CD8-positive, alpha-beta T cell (primary cell): ENCODE measurements at regions of chr2 and their contacts with region 1.

Region 1: GRCh38 chr2:46351750-46352138 is 54.5 kb downstream of the EPAS1 start:
- DNase-seq: peak; percentile 34 to 86 (median 65)
- ATAC-seq: peak; percentile 85
- H3K4me3 ChIP-seq: peak overlapping the region; percentile 36 to 38
- H3K4me3 Mint-ChIP-seq: peak overlapping the region; percentile 75
- H3K27ac ChIP-seq: peak overlapping the region; percentile 28 to 67
- H3K27ac Mint-ChIP-seq: peak overlapping the region; percentile 87
- H3K4me1 ChIP-seq: peaks cover 65% of the 10 kb centered on the region
- H3K4me1 Mint-ChIP-seq: peaks cover 85% of the 10 kb centered on the region
- H3K27me3 ChIP-seq: no peaks in the 10 kb centered on the region
- H3K27me3 Mint-ChIP-seq: no peaks in the 10 kb centered on the region
- CTCF ChIP-seq: no peak

Region 2: GRCh38 chr2:46335391-46336282 is 16.1 kb before region 1 on chr2:
- CTCF ChIA-PET with region 1: interaction called, 6 read pairs
- POLR2A ChIA-PET with region 1: interaction called, 4 read pairs
- intact Hi-C with region 1: loop called in 1 of 2 experiments (anchors 2 kb)
- DNase-seq: no peak
- ATAC-seq: no peak
- H3K4me3 ChIP-seq: no peak overlapping the region
- H3K4me3 Mint-ChIP-seq: no peak overlapping the region
- H3K27ac ChIP-seq: no peak overlapping the region
- H3K27ac Mint-ChIP-seq: no peak overlapping the region
- H3K4me1 ChIP-seq: peaks cover 10% of the 10 kb centered on the region
- H3K4me1 Mint-ChIP-seq: peaks cover 17% of the 10 kb centered on the region
- H3K27me3 ChIP-seq: peaks cover 0 to 2% of the 10 kb centered on the region in 2 experiments
- H3K27me3 Mint-ChIP-seq: peaks cover 5% of the 10 kb centered on the region
- CTCF ChIP-seq: no peak

Region 3: DNA sequence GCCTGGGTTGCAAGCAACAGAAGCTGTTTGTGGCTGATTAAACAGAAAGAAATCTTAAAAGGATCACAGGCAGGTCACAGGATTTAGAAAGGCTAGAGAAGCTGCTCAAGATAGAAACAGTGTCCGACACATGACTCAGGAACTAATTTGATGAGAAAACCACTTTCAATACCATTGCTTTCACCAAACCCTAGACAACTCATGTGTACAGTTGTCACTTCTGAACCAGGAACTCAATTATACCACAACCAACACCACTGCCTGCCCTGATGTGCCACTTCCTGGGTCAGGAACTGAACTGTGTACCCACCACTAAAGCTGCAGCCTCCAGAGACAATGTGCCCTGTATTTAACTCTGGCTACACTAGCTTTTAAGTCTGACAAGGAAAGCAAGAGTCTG is 183.6 kb after region 1 on chr2:
- CTCF ChIA-PET with region 1: no interaction called
- POLR2A ChIA-PET with region 1: no interaction called
- intact Hi-C with region 1: loop called in 1 of 2 experiments (anchors 5 kb)
- DNase-seq: peak in 7 of 9 experiments; percentile 22 to 82 (median 55)
- ATAC-seq: peak; percentile 88
- H3K4me3 ChIP-seq: peak overlapping the region; percentile 2 to 7
- H3K4me3 Mint-ChIP-seq: peak overlapping the region; percentile 72
- H3K27ac ChIP-seq: peak overlapping the region in 1 of 2 experiments; percentile 66
- H3K27ac Mint-ChIP-seq: peak overlapping the region; percentile 87
- H3K4me1 ChIP-seq: peaks cover 48% of the 10 kb centered on the region
- H3K4me1 Mint-ChIP-seq: peaks cover 62% of the 10 kb centered on the region
- H3K27me3 ChIP-seq: no peaks in the 10 kb centered on the region
- H3K27me3 Mint-ChIP-seq: no peaks in the 10 kb centered on the region
- CTCF ChIP-seq: no peak

Region 4: GRCh38 chr2:48080534-48081316 is 1729.0 kb after region 1 on chr2:
- CTCF ChIA-PET with region 1: no interaction called
- POLR2A ChIA-PET with region 1: no interaction called
- intact Hi-C with region 1: no loop called
- DNase-seq: no peak
- ATAC-seq: no peak
- H3K4me3 ChIP-seq: no peak overlapping the region
- H3K4me3 Mint-ChIP-seq: no peak overlapping the region
- H3K27ac ChIP-seq: no peak overlapping the region
- H3K27ac Mint-ChIP-seq: no peak overlapping the region
- H3K4me1 ChIP-seq: no peaks in the 10 kb centered on the region
- H3K4me1 Mint-ChIP-seq: no peaks in the 10 kb centered on the region
- H3K27me3 ChIP-seq: no peaks in the 10 kb centered on the region
- H3K27me3 Mint-ChIP-seq: peaks cover 2% of the 10 kb centered on the region
- CTCF ChIP-seq: no peak